Activated naive CD4-positive, alpha-beta T cell treated with anti-CD3 and anti-CD28 coated beads for 36 hours (primary cell): ENCODE measurements at regions of chr1 and their contacts with region 1.

Region 1: GRCh38 chr1:31182352-31182751 is 57.3 kb downstream of the NKAIN1 start:
- DNase-seq: peak; percentile 66
- H3K4me3 Mint-ChIP-seq: no peak overlapping the region
- H3K27ac Mint-ChIP-seq: no peak overlapping the region
- H3K4me1 Mint-ChIP-seq: peaks cover 8% of the 10 kb centered on the region
- H3K27me3 Mint-ChIP-seq: peaks cover 37% of the 10 kb centered on the region

Region 2: DNA sequence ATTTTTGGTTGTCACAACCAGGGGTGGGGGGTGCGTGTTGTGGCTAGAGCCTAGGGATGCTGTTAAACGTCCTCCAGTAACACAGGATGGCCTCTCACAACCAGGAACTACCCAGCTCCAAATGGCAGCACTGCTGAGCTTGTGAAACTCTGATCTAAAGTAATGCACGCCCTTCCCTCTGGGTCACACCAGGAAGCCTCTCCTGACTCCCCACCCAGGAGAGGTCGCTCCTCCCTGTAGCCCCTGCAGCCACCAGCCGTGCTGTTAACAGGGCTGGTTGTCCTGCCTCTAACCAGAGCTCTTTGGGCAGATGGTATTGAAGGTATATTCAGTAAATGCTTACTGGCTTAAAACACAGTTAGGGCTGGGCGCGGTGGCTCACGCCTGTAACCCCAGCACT is 15.9 kb before region 1 on chr1:
- CTCF ChIA-PET with region 1: interaction called, 13 read pairs
- intact Hi-C with region 1: no loop called
- DNase-seq: no peak
- H3K4me3 Mint-ChIP-seq: no peak overlapping the region
- H3K27ac Mint-ChIP-seq: no peak overlapping the region
- H3K4me1 Mint-ChIP-seq: peaks cover 5% of the 10 kb centered on the region
- H3K27me3 Mint-ChIP-seq: peaks cover 2% of the 10 kb centered on the region

Region 3: GRCh38 chr1:31335007-31335406 is 152.7 kb after region 1 on chr1:
- CTCF ChIA-PET with region 1: no interaction called
- intact Hi-C with region 1: loop called (anchors 5 kb)
- DNase-seq: no peak
- H3K4me3 Mint-ChIP-seq: no peak overlapping the region
- H3K27ac Mint-ChIP-seq: no peak overlapping the region
- H3K4me1 Mint-ChIP-seq: peaks cover 2% of the 10 kb centered on the region
- H3K27me3 Mint-ChIP-seq: no peaks in the 10 kb centered on the region

Region 4: GRCh38 chr1:31422505-31423319 is 240.4 kb after region 1 on chr1:
- CTCF ChIA-PET with region 1: interaction called, 4 read pairs
- intact Hi-C with region 1: loop called (anchors 1 kb)
- DNase-seq: peak; percentile 81
- H3K4me3 Mint-ChIP-seq: no peak overlapping the region
- H3K27ac Mint-ChIP-seq: no peak overlapping the region
- H3K4me1 Mint-ChIP-seq: peaks cover 2% of the 10 kb centered on the region
- H3K27me3 Mint-ChIP-seq: peaks cover 22% of the 10 kb centered on the region